CD8-positive, alpha-beta memory T cell (primary cell): ENCODE measurements at regions of chr6 and their contacts with region 1.

Region 1: DNA sequence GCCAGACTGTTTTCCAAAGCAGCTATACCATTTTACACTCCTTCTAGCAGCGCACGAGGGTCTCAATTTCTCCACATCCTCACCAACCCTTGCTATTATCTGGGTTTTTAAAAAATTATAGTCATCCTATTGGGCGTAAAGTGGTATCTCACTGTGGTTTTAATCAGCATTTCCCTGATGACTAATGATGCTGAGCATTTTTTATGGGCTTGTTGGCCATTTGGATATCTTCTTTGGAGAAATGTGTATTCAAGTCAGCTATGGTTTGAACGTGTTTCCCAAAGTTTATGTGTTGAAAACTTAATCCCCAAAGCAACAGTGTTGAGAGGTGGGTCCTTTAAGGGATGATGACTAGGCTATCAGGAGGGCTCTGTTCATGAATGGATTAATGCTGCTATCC is 6.7 kb downstream of the MCUR1 start:
- DNase-seq: no peak
- H3K4me3 ChIP-seq: no peak overlapping the region
- H3K4me3 Mint-ChIP-seq: no peak overlapping the region
- H3K27ac ChIP-seq: no peak overlapping the region
- H3K27ac Mint-ChIP-seq: no peak overlapping the region
- H3K4me1 ChIP-seq: peaks cover 5% of the 10 kb centered on the region
- H3K4me1 Mint-ChIP-seq: peaks cover 22 to 28% (median 25%) of the 10 kb centered on the region in 3 donors
- H3K27me3 ChIP-seq: no peaks in the 10 kb centered on the region
- H3K27me3 Mint-ChIP-seq: no peaks in the 10 kb centered on the region

Region 2: DNA sequence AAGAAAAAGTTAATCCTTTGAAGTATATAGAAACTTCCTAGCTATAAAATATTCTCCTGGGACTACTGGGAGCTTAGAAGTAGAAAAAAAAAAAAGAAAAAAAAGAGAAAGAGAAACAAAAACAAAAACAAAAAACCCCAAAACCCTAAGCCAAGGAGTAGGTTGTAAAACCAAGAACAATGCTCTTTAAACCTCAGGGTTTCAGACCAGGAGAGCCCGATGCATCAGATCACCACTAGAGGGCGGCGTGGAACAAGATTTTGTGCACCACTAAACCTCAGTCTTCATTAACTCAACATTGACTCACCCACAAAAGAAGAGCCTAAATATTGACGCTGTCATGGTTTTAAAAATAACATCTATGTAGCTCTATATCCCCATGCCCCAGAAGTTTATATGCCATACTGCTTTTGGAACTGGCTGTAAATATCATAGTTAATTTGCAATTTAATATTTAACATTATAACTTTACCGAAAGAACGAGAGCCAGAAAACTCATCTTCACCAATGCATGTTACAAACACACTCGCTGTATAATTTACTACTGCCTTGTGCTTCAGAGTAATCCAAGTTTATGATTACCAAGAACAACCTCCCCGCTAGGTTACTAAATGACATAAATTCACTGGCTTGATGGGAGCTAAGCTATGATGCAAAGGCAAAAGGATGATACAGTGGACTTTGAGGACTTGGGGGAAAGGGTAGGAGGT is 12.5 kb before region 1 on chr6:
- CTCF ChIA-PET with region 1: interaction called, 10 read pairs
- POLR2A ChIA-PET with region 1: no interaction called
- DNase-seq: peak; percentile 53 to 86 (median 65)
- H3K4me3 ChIP-seq: no peak overlapping the region
- H3K4me3 Mint-ChIP-seq: no peak overlapping the region
- H3K27ac ChIP-seq: no peak overlapping the region
- H3K27ac Mint-ChIP-seq: peak overlapping the region in 5 of 8 donors; percentile 8 to 56 (median 33)
- H3K4me1 ChIP-seq: no peaks in the 10 kb centered on the region
- H3K4me1 Mint-ChIP-seq: peaks cover 5 to 9% (median 7%) of the 10 kb centered on the region in 3 donors
- H3K27me3 ChIP-seq: no peaks in the 10 kb centered on the region
- H3K27me3 Mint-ChIP-seq: no peaks in the 10 kb centered on the region

Region 3: DNA sequence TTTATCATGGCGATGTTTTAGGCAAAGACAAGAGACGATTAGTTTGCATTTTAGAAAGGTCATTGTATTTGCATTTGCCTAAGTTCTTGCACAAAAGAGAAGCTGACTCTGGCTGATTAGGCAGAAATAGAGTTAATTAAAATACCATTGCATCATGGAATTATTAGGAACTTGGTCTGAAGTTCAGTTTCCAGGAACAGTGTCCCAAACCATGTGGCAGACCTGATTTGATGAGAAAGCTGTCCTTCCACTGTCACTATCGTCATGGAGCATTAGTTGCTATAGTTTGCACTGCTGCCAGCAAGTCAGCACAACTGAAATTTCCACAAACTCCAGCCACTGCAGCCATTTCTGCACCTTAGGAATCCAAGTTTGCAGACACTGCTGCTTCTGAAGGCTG is 30.9 kb after region 1 on chr6:
- CTCF ChIA-PET with region 1: no interaction called
- POLR2A ChIA-PET with region 1: no interaction called
- DNase-seq: no peak
- H3K4me3 ChIP-seq: no peak overlapping the region
- H3K4me3 Mint-ChIP-seq: no peak overlapping the region
- H3K27ac ChIP-seq: no peak overlapping the region
- H3K27ac Mint-ChIP-seq: peak overlapping the region in 1 of 8 donors; percentile 85
- H3K4me1 ChIP-seq: no peaks in the 10 kb centered on the region
- H3K4me1 Mint-ChIP-seq: no peaks in the 10 kb centered on the region
- H3K27me3 ChIP-seq: no peaks in the 10 kb centered on the region
- H3K27me3 Mint-ChIP-seq: no peaks in the 10 kb centered on the region